Vagina (tissue), 2 donors: ENCODE measurements at regions of chr13 and their contacts with region 1.

Region 1: GRCh38 chr13:45036206-45036605 is 46.9 kb downstream of the GPALPP1 start:
- DNase-seq: no peak
- H3K4me3 ChIP-seq: no peak overlapping the region
- H3K27ac ChIP-seq: no peak overlapping the region
- H3K4me1 ChIP-seq: no peaks in the 10 kb centered on the region
- H3K27me3 ChIP-seq: no peaks in the 10 kb centered on the region
- CTCF ChIP-seq: no peak
- POLR2A ChIP-seq: no peak

Region 2: GRCh38 chr13:45482571-45483173 is 446.5 kb after region 1 on chr13:
- intact Hi-C with region 1: loop called (anchors 10 kb)
- DNase-seq: no peak
- H3K4me3 ChIP-seq: no peak overlapping the region
- H3K27ac ChIP-seq: no peak overlapping the region
- H3K4me1 ChIP-seq: peaks cover 6% of the 10 kb centered on the region
- H3K27me3 ChIP-seq: no peaks in the 10 kb centered on the region
- CTCF ChIP-seq: no peak
- POLR2A ChIP-seq: no peak